Activated CD8-positive, alpha-beta T cell treated with anti-CD3 and anti-CD28 coated beads for 36 hours (primary cell): ENCODE measurements at regions of chr2 and their contacts with region 1.

Region 1: GRCh38 chr2:221573430-221574230 is 1.5 kb upstream of the EPHA4 start:
- DNase-seq: peak; percentile 81
- ATAC-seq: peak; percentile 55
- H3K4me3 Mint-ChIP-seq: peak overlapping the region; percentile 61
- H3K27ac Mint-ChIP-seq: no peak overlapping the region
- H3K4me1 Mint-ChIP-seq: peaks cover 21% of the 10 kb centered on the region
- H3K27me3 Mint-ChIP-seq: peaks cover 57% of the 10 kb centered on the region
- CTCF ChIP-seq: peak; percentile 94

Region 2: GRCh38 chr2:219736209-219736608 is 1837.4 kb before region 1 on chr2:
- CTCF ChIA-PET with region 1: interaction called, 3 read pairs
- POLR2A ChIA-PET with region 1: no interaction called
- intact Hi-C with region 1: loop called (anchors 10 kb)
- DNase-seq: no peak
- ATAC-seq: no peak
- H3K4me3 Mint-ChIP-seq: no peak overlapping the region
- H3K27ac Mint-ChIP-seq: no peak overlapping the region
- H3K4me1 Mint-ChIP-seq: no peaks in the 10 kb centered on the region
- H3K27me3 Mint-ChIP-seq: peaks cover 13% of the 10 kb centered on the region
- CTCF ChIP-seq: peak; percentile 38

Region 3: DNA sequence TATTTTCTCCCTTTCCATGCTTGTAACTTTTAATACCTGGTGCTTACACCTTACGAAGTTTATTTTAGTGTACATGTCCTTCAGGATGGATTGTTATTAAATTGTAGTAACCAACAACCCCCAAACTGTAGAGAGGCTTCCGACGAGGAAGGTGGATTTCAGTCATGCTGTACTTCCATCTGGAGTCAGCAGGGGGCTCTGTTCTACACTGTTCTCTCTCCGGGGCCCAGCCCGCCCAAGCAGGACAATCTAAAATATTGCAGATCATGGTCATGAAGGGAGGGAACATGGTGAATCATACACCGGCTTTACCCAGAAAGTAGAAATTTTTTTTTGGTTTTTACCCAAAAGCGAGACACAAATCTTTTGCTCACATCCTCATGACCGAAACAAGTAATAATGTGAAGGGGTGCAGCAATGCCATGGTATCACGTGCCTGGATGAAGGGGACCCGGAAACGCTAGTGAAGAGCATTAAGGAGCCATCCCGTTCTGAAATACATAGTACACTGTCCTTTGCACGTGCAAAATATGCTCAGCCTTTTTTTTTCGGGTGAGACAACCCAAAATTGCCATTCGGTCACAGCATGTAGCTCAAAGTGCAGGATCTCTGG is 886.3 kb before region 1 on chr2:
- CTCF ChIA-PET with region 1: interaction called, 5 read pairs
- POLR2A ChIA-PET with region 1: no interaction called
- intact Hi-C with region 1: loop called (anchors 2 kb)
- DNase-seq: peak; percentile 74
- ATAC-seq: peak; percentile 87
- H3K4me3 Mint-ChIP-seq: no peak overlapping the region
- H3K27ac Mint-ChIP-seq: no peak overlapping the region
- H3K4me1 Mint-ChIP-seq: no peaks in the 10 kb centered on the region
- H3K27me3 Mint-ChIP-seq: peaks cover 5% of the 10 kb centered on the region
- CTCF ChIP-seq: peak; percentile 78

Region 4: GRCh38 chr2:221254299-221254698 is 319.3 kb before region 1 on chr2:
- CTCF ChIA-PET with region 1: no interaction called
- POLR2A ChIA-PET with region 1: no interaction called
- intact Hi-C with region 1: loop called (anchors 5 kb)
- DNase-seq: no peak
- ATAC-seq: no peak
- H3K4me3 Mint-ChIP-seq: no peak overlapping the region
- H3K27ac Mint-ChIP-seq: no peak overlapping the region
- H3K4me1 Mint-ChIP-seq: no peaks in the 10 kb centered on the region
- H3K27me3 Mint-ChIP-seq: peaks cover 1% of the 10 kb centered on the region
- CTCF ChIP-seq: no peak

Region 5: DNA sequence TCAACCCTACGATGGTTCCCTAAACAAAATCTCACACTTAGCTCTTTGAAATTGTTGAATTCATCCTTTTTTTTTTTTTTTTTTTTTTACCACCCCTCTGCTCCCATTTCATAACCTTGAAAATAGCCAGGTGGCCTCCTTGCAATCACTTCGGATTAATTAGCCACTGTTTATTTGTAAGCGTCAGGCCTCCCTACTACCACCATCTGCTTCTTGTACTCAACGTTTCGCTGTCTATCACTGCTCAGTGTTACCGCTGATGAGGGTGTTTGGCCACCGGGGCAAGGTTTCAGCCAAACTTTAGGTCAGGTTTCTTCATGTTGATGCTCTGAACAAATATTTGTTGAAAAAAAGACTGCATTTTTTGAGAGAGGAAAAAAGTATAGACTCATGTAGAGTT is 184.7 kb before region 1 on chr2:
- CTCF ChIA-PET with region 1: no interaction called
- POLR2A ChIA-PET with region 1: no interaction called
- intact Hi-C with region 1: loop called (anchors 10 kb)
- DNase-seq: no peak
- ATAC-seq: no peak
- H3K4me3 Mint-ChIP-seq: no peak overlapping the region
- H3K27ac Mint-ChIP-seq: no peak overlapping the region
- H3K4me1 Mint-ChIP-seq: peaks cover 6% of the 10 kb centered on the region
- H3K27me3 Mint-ChIP-seq: peaks cover 1% of the 10 kb centered on the region
- CTCF ChIP-seq: no peak